Breast epithelium (tissue), 4 donors: ENCODE measurements at regions of chr19 and their contacts with region 1.

Region 1: GRCh38 chr19:20607943-20608342 is 42.4 kb upstream of the ZNF737 start:
- DNase-seq: no peak
- H3K4me3 ChIP-seq: no peak overlapping the region
- H3K27ac ChIP-seq: no peak overlapping the region
- H3K4me1 ChIP-seq: no peaks in the 10 kb centered on the region
- H3K27me3 ChIP-seq: no peaks in the 10 kb centered on the region
- CTCF ChIP-seq: no peak
- POLR2A ChIP-seq: no peak

Region 2: GRCh38 chr19:19591133-19591825 is 1016.7 kb before region 1 on chr19:
- intact Hi-C with region 1: loop called (anchors 10 kb)
- DNase-seq: peak in 1 of 2 donors; percentile 73
- H3K4me3 ChIP-seq: no peak overlapping the region
- H3K27ac ChIP-seq: peak overlapping the region; percentile 84 to 90
- H3K4me1 ChIP-seq: peaks cover 6 to 7% of the 10 kb centered on the region in 2 donors
- H3K27me3 ChIP-seq: no peaks in the 10 kb centered on the region
- CTCF ChIP-seq: no peak
- POLR2A ChIP-seq: no peak

Region 3: GRCh38 chr19:19643158-19644053 is 964.5 kb before region 1 on chr19 and contains the start of gene GMIP:
- intact Hi-C with region 1: no loop called
- DNase-seq: peak; percentile 64 to 75
- H3K4me3 ChIP-seq: peak within 1 kb of the TSS; percentile 68 to 85 (median 78)
- H3K27ac ChIP-seq: peak within 1 kb of the TSS; percentile 63 to 80
- H3K4me1 ChIP-seq: no peaks in the 10 kb centered on the region
- H3K27me3 ChIP-seq: no peaks in the 10 kb centered on the region
- CTCF ChIP-seq: peak; percentile 76 to 89 (median 88)
- POLR2A ChIP-seq: no peak
- total RNA-seq, gene GMIP: 7.9 to 10.4 (median 8.5) TPM

Region 4: GRCh38 chr19:21626924-21627697 is 1019.2 kb after region 1 on chr19:
- intact Hi-C with region 1: no loop called
- DNase-seq: no peak
- H3K4me3 ChIP-seq: no peak overlapping the region
- H3K27ac ChIP-seq: no peak overlapping the region
- H3K4me1 ChIP-seq: no peaks in the 10 kb centered on the region
- H3K27me3 ChIP-seq: no peaks in the 10 kb centered on the region
- CTCF ChIP-seq: no peak
- POLR2A ChIP-seq: no peak